CD4-positive, alpha-beta memory T cell (primary cell): ENCODE measurements at regions of chr16 and their contacts with region 1.

Region 1: DNA sequence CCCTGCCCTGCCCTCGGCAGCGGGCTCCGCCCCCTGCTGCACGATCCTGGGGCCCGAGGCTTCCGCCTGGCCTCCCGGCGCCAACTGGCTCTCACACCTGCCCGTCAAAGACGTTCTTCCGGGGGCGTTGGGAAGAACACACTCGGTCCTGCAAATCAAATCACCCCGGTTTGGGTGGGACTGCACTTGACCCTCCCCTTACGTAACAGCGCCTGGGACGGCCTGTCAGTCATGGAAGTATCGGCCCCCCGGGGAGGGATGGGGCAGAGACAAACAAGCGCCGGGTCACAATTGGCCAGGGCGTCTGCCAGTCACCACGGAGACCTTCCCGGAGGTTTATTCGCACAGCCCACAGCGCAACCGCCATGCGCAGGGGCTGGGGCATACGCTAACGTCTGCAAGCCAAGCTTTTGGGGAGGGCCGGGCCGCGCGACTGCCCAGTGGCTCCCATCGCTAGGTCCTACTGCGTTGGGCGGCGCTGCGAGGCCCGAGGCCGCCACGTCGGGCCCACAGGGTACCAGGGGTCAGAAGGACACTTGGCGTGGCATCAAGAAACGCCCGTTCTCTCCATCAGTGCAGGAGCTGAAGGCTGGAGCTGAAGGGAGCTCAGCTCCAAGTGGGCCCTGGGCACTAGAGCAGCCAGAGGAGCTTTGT is 388 bp upstream of the AKTIP start:
- DNase-seq: peak; percentile 99 to 100 (median 100)
- H3K4me3 ChIP-seq: peak overlapping the region; percentile 40 to 83
- H3K4me3 Mint-ChIP-seq: peak overlapping the region; percentile 90 to 95 (median 92)
- H3K27ac ChIP-seq: peak overlapping the region; percentile 76
- H3K27ac Mint-ChIP-seq: peak overlapping the region; percentile 87 to 94 (median 91)
- H3K4me1 ChIP-seq: peaks cover 52% of the 10 kb centered on the region
- H3K4me1 Mint-ChIP-seq: peaks cover 38 to 61% (median 50%) of the 10 kb centered on the region in 4 donors
- H3K27me3 ChIP-seq: no peaks in the 10 kb centered on the region
- H3K27me3 Mint-ChIP-seq: no peaks in the 10 kb centered on the region

Region 2: GRCh38 chr16:53007095-53007494 is 496.3 kb before region 1 on chr16:
- CTCF ChIA-PET with region 1: no interaction called
- POLR2A ChIA-PET with region 1: no interaction called
- intact Hi-C with region 1: no loop called
- DNase-seq: no peak
- H3K4me3 ChIP-seq: no peak overlapping the region
- H3K4me3 Mint-ChIP-seq: no peak overlapping the region
- H3K27ac ChIP-seq: no peak overlapping the region
- H3K27ac Mint-ChIP-seq: no peak overlapping the region
- H3K4me1 ChIP-seq: no peaks in the 10 kb centered on the region
- H3K4me1 Mint-ChIP-seq: no peaks in the 10 kb centered on the region
- H3K27me3 ChIP-seq: no peaks in the 10 kb centered on the region
- H3K27me3 Mint-ChIP-seq: peaks cover 11 to 13% of the 10 kb centered on the region in 2 donors

Region 3: DNA sequence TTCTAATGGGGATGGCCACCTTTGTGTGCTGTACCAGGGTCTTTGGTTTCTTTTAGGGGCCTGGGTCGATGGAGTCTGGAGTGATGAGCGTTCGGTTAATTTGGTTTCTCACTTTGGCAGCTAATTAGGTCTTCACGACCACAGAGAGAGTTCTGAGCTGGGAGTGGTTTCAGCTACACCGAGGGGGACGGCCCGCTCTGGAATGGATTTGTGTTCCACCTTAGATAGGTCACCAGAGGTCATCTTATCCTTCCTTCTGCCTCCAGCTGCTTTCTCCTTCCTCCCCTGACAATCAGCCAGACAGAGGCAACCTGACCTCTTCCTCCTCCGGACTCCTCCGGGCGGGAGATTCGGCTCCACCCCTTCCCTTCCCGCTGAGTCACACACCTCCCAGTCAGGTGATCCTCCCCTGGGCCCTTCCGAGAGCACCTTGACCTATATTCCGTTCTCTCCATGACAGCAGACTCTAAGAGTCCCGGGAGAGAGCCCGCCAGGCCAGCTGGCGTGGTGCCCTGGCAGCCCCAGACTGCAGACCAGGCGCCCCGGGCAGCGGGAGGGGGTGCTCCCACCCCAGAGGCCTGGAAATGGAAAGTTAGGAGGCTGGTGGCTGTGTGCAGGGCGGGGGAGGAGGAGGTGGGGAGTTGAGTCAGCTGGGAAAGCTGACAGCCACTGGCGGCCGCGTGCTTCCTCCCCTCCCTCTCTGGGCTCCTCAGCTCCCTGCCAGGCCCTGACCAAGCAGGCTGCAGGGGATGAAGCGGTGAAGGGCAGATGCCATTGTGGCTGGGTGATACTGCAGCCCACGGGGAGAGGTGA is 403.9 kb before region 1 on chr16:
- CTCF ChIA-PET with region 1: no interaction called
- POLR2A ChIA-PET with region 1: no interaction called
- intact Hi-C with region 1: no loop called
- DNase-seq: peak; percentile 51 to 82 (median 53)
- H3K4me3 ChIP-seq: peak overlapping the region; percentile 37 to 53
- H3K4me3 Mint-ChIP-seq: peak overlapping the region; percentile 90 to 97 (median 94)
- H3K27ac ChIP-seq: peak overlapping the region; percentile 69
- H3K27ac Mint-ChIP-seq: peak overlapping the region; percentile 88 to 99 (median 94)
- H3K4me1 ChIP-seq: peaks cover 30% of the 10 kb centered on the region
- H3K4me1 Mint-ChIP-seq: peaks cover 19 to 40% (median 28%) of the 10 kb centered on the region in 4 donors
- H3K27me3 ChIP-seq: no peaks in the 10 kb centered on the region
- H3K27me3 Mint-ChIP-seq: no peaks in the 10 kb centered on the region

Region 4: GRCh38 chr16:53249331-53249730 is 254.1 kb before region 1 on chr16:
- CTCF ChIA-PET with region 1: no interaction called
- POLR2A ChIA-PET with region 1: no interaction called
- intact Hi-C with region 1: loop called (anchors 10 kb)
- DNase-seq: no peak
- H3K4me3 ChIP-seq: no peak overlapping the region
- H3K4me3 Mint-ChIP-seq: no peak overlapping the region
- H3K27ac ChIP-seq: no peak overlapping the region
- H3K27ac Mint-ChIP-seq: peak overlapping the region in 1 of 7 donors; percentile 15
- H3K4me1 ChIP-seq: no peaks in the 10 kb centered on the region
- H3K4me1 Mint-ChIP-seq: peaks cover 0 to 2% (median 0%) of the 10 kb centered on the region in 4 donors
- H3K27me3 ChIP-seq: no peaks in the 10 kb centered on the region
- H3K27me3 Mint-ChIP-seq: no peaks in the 10 kb centered on the region

Region 5: DNA sequence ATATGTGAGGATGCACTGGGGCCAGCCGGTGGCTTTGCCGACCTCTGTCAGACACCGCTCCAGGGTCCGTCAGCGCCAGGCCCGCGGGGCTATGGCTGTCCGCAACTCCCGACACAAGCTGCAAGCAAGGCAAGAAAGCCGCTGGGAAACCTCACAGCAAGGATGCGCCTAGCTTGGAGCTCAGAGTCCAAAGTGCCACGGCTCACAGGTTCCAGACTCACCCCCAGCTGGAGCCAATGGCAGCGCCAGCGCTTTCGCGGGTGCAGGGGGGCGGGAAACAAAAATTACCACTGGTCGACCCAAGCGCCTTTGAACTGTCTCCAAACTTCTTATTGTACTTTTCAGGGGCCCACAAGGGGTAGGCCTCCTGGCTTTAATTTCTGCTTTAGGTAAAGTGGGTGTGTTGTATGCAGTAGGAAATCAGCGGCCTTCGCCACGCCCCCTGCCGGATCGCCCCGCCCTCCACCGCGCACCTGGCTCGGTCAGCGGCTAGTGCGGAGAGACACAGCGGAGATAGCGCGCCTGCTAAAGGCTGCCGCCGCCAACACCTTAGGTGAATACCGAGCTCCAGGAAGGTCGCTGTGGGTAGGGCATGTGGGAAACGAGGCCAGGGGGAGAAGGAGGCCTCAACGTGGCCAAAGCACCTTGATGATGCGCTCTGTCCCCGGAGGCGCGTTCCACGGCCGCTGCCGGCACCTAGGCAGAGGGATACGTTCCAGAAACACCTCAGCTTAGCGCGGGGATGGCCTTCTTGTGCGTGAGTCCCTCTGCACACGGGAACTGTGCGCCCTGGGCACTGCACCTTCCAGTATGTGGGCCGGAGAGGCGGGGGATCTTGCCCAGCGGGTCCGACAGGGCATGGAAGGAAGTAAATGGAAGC is 130.2 kb before region 1 on chr16:
- CTCF ChIA-PET with region 1: no interaction called
- POLR2A ChIA-PET with region 1: interaction called, 6 read pairs
- intact Hi-C with region 1: loop called (anchors 2 kb)
- DNase-seq: peak; percentile 74 to 84 (median 81)
- H3K4me3 ChIP-seq: peak overlapping the region; percentile 52 to 59
- H3K4me3 Mint-ChIP-seq: peak overlapping the region in 1 of 8 donors; percentile 87
- H3K27ac ChIP-seq: peak overlapping the region; percentile 27
- H3K27ac Mint-ChIP-seq: peak overlapping the region; percentile 71 to 91 (median 88)
- H3K4me1 ChIP-seq: peaks cover 10% of the 10 kb centered on the region
- H3K4me1 Mint-ChIP-seq: peaks cover 14 to 21% (median 18%) of the 10 kb centered on the region in 4 donors
- H3K27me3 ChIP-seq: no peaks in the 10 kb centered on the region
- H3K27me3 Mint-ChIP-seq: peaks cover 0 to 3% of the 10 kb centered on the region in 2 donors

Region 6: GRCh38 chr16:53482123-53482522 is 21.3 kb before region 1 on chr16:
- CTCF ChIA-PET with region 1: interaction called, 3 read pairs
- POLR2A ChIA-PET with region 1: interaction called, 13 read pairs
- intact Hi-C with region 1: no loop called
- DNase-seq: no peak
- H3K4me3 ChIP-seq: no peak overlapping the region
- H3K4me3 Mint-ChIP-seq: no peak overlapping the region
- H3K27ac ChIP-seq: no peak overlapping the region
- H3K27ac Mint-ChIP-seq: peak overlapping the region in 5 of 7 donors; percentile 19 to 65 (median 44)
- H3K4me1 ChIP-seq: peaks cover 12% of the 10 kb centered on the region
- H3K4me1 Mint-ChIP-seq: peaks cover 13 to 35% (median 22%) of the 10 kb centered on the region in 4 donors
- H3K27me3 ChIP-seq: no peaks in the 10 kb centered on the region
- H3K27me3 Mint-ChIP-seq: no peaks in the 10 kb centered on the region

Region 7: GRCh38 chr16:53489755-53490154 is 13.6 kb before region 1 on chr16:
- CTCF ChIA-PET with region 1: interaction called, 7 read pairs
- POLR2A ChIA-PET with region 1: interaction called, 20 read pairs
- intact Hi-C with region 1: loop called (anchors 2 kb)
- DNase-seq: no peak
- H3K4me3 ChIP-seq: no peak overlapping the region
- H3K4me3 Mint-ChIP-seq: peak overlapping the region in 1 of 8 donors; percentile 23
- H3K27ac ChIP-seq: no peak overlapping the region
- H3K27ac Mint-ChIP-seq: peak overlapping the region in 6 of 7 donors; percentile 22 to 92 (median 72)
- H3K4me1 ChIP-seq: peaks cover 25% of the 10 kb centered on the region
- H3K4me1 Mint-ChIP-seq: peaks cover 27 to 55% (median 36%) of the 10 kb centered on the region in 4 donors
- H3K27me3 ChIP-seq: no peaks in the 10 kb centered on the region
- H3K27me3 Mint-ChIP-seq: no peaks in the 10 kb centered on the region

Region 8: DNA sequence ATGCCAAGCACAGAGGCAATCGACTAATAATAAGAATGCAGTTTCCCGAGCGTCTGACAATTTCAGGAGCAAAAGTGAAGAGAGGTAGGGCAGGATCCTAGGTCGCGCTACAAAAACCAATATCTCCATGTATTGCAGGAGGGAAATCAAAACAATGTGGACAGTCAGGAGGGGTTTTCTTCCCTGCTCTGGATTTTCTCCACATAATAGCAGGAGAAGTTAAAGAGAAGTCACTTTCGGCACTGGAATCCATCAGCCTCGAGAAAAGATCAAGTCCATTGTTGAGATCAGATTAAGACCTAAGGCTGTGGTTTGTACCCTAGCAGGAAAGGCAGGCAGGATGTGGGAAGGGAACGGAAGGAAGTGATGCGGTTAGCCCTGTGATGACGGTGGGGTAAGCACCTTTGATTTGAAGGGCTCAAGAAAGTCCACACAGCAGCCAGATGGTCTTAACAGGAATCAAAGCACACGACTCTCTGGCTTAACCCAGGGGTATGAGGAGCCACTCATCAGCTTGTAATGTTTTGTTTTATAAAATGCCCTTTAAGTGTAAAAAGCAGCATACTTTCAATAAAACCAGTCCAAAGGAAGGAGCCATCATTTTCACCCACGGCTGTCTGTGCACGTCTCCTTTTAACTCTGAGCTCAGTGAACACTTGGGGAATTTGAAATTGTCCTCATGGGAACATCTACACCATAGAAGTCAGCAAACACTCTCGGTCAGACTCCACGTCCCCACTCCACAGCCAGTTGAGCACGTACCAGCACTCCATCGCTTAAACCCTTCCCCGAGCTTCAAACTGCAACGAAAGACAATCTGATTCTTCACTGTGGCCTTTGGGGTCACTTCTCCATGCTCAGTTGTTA is 15.4 kb after region 1 on chr16:
- CTCF ChIA-PET with region 1: interaction called, 4 read pairs
- POLR2A ChIA-PET with region 1: interaction called, 49 read pairs
- intact Hi-C with region 1: loop called (anchors 1 kb)
- DNase-seq: peak; percentile 83 to 89 (median 86)
- H3K4me3 ChIP-seq: peak overlapping the region; percentile 17 to 45
- H3K4me3 Mint-ChIP-seq: peak overlapping the region; percentile 79 to 92 (median 85)
- H3K27ac ChIP-seq: peak overlapping the region; percentile 43
- H3K27ac Mint-ChIP-seq: peak overlapping the region; percentile 85 to 97 (median 94)
- H3K4me1 ChIP-seq: peaks cover 43% of the 10 kb centered on the region
- H3K4me1 Mint-ChIP-seq: peaks cover 52 to 83% (median 59%) of the 10 kb centered on the region in 4 donors
- H3K27me3 ChIP-seq: no peaks in the 10 kb centered on the region
- H3K27me3 Mint-ChIP-seq: no peaks in the 10 kb centered on the region

Region 9: DNA sequence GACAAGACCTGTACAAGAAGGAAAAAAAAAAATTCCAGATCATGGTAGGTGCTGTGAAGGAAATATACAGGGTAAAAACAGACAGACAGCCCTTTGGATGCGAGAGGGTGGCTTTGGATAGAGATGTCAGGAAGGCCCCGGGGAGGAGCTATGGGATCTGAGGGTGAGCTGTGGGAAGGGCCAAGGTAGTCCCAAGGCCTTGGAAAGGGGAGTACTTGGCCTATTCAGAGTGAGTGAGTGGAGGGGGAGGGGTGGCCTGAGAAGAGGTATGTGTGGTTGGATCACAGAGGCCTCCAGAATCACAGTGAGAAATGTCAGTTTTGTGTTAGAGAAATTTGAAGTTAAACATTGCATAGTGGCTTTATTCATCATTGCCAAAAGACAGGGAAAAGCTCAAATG is 30.8 kb after region 1 on chr16:
- CTCF ChIA-PET with region 1: no interaction called
- POLR2A ChIA-PET with region 1: no interaction called
- intact Hi-C with region 1: no loop called
- DNase-seq: no peak
- H3K4me3 ChIP-seq: no peak overlapping the region
- H3K4me3 Mint-ChIP-seq: no peak overlapping the region
- H3K27ac ChIP-seq: no peak overlapping the region
- H3K27ac Mint-ChIP-seq: peak overlapping the region in 4 of 7 donors; percentile 31 to 73 (median 40)
- H3K4me1 ChIP-seq: peaks cover 19% of the 10 kb centered on the region
- H3K4me1 Mint-ChIP-seq: peaks cover 14 to 28% (median 22%) of the 10 kb centered on the region in 4 donors
- H3K27me3 ChIP-seq: no peaks in the 10 kb centered on the region
- H3K27me3 Mint-ChIP-seq: no peaks in the 10 kb centered on the region

Region 10: DNA sequence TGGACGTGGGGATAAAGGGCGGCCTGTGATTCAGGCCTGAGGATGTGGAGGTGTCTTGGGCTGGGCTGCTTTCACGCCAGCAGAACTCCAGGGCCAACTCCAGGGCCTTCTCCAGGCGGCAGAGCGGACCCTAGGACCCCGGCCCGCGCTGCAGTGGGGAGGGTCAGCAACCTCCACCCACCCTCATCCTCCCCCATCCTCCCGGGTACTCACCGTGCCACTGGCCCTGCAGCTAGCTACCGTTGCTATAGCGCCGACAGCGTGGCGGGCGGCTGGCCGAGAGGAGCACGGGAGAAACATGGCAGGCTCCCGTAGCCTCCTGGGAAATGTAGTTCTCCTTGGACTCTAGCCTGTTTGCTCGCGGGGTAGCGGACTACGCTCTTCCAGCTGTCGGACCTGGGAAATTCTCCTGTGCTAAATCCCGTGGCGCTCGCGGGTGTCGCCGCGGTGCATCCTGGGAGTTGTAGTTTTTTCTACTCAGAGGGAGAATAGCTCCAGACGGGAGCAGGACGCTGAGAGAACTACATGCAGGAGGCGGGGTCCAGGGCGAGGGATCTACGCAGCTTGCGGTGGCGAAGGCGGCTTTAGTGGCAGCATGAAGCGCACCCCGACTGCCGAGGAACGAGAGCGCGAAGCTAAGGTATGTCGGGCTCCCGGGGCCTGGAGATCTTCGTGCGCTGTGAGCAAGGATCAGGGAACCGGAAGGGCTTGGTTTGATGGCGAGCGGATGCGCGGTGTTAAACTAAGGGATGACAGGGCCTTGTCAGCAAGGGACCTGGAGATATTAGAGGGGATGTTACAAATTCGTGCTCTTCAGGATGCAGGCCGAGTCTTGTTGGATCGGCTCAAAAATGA is 200.4 kb after region 1 on chr16 and contains the starts of genes FTO and RPGRIP1L:
- CTCF ChIA-PET with region 1: no interaction called
- POLR2A ChIA-PET with region 1: interaction called, 6 read pairs
- intact Hi-C with region 1: loop called (anchors 1 kb)
- DNase-seq: peak; percentile 95 to 97 (median 96)
- H3K4me3 ChIP-seq: peak within 1 kb of the TSS; percentile 54 to 85
- H3K4me3 Mint-ChIP-seq: peak within 1 kb of the TSS; percentile 96 to 100 (median 98)
- H3K27ac ChIP-seq: peak within 1 kb of the TSS; percentile 59
- H3K27ac Mint-ChIP-seq: peak within 1 kb of the TSS; percentile 90 to 99 (median 97)
- H3K4me1 ChIP-seq: peaks cover 23% of the 10 kb centered on the region
- H3K4me1 Mint-ChIP-seq: peaks cover 22 to 47% (median 36%) of the 10 kb centered on the region in 4 donors
- H3K27me3 ChIP-seq: no peaks in the 10 kb centered on the region
- H3K27me3 Mint-ChIP-seq: no peaks in the 10 kb centered on the region
- total RNA-seq, gene FTO: 61.5 to 68.8 TPM
- total RNA-seq, gene RPGRIP1L: 4.2 to 4.3 TPM